GM12878 (cell line): ENCODE measurements at regions of chr10 and their contacts with region 1.

Region 1: GRCh38 chr10:5805711-5806110 is 7.5 kb downstream of the GDI2 start:
- DNase-seq: no peak
- ATAC-seq: no peak
- H3K4me3 ChIP-seq: no peak overlapping the region
- H3K27ac ChIP-seq: no peak overlapping the region
- H3K4me1 ChIP-seq: peaks cover 8% of the 10 kb centered on the region
- H3K27me3 ChIP-seq: no peaks in the 10 kb centered on the region
- CTCF ChIP-seq: no peak
- EP300 ChIP-seq: no peak
- POLR2A ChIP-seq: no peak
- RAD21 ChIP-seq: no peak

Region 2: GRCh38 chr10:5854106-5854570 is 48.4 kb after region 1 on chr10:
- CTCF ChIA-PET with region 1: interaction called, 5 read pairs
- POLR2A ChIA-PET with region 1: interaction called, 10 read pairs
- RAD21 ChIA-PET with region 1: interaction called, 5 read pairs
- SMC1A ChIA-PET with region 1: interaction called, 21 read pairs
- in situ Hi-C with region 1: no loop called
- intact Hi-C with region 1: no loop called
- DNase-seq: no peak
- ATAC-seq: no peak
- H3K4me3 ChIP-seq: no peak overlapping the region
- H3K27ac ChIP-seq: no peak overlapping the region
- H3K4me1 ChIP-seq: peaks cover 8% of the 10 kb centered on the region
- H3K27me3 ChIP-seq: no peaks in the 10 kb centered on the region; a peak in 1 of 4 replicates
- CTCF ChIP-seq: no peak
- EP300 ChIP-seq: no peak
- POLR2A ChIP-seq: no peak
- RAD21 ChIP-seq: no peak